ENCODE measurements at regions of chr3 and their contacts with region 1.

Region 1: GRCh38 chr3:138915503-138916498 is 31.1 kb downstream of the FOXL2 start:
- DNase-seq: peak; percentile 97
- ATAC-seq: peak; percentile 92
- H3K4me3 Mint-ChIP-seq: peak overlapping the region; percentile 66
- H3K27ac Mint-ChIP-seq: 0 out of 2 replicates have a peak overlapping the region, but pooled peaks have one; percentile 65
- H3K4me1 Mint-ChIP-seq: peaks cover 3% of the 10 kb centered on the region
- H3K27me3 Mint-ChIP-seq: peaks cover 10% of the 10 kb centered on the region
- CTCF ChIP-seq: peak; percentile 93

Region 2: DNA sequence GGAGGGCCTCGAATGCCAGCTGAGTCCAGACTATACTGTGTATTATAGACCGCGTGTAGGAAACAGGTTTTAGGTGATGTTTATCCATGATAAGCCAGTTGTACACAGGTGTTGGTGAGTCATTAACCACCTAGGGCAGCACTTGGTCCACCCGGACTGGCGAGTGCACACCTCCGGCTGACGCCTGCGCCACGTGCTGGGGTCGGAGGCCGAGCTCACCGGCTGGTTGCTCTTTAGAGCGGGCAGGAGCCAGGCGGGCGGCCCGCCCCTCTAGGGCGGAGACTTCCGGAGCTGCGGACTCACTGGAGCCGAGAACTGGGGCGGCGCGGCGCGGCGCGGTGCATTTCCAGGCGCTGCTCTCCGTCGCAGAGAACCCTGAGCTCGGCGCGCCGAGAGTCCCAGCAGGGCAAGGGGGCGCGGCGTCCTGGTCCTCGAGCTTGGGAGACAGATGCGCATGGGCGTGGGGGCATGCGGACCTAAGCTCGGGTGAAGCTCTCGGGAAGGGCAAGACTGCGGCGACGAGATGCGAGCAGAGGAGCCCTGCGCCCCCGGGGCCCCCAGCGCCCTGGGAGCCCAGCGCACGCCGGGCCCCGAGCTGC is 481.4 kb before region 1 on chr3 and contains the start of gene ESYT3:
- CTCF ChIA-PET with region 1: interaction called, 12 read pairs
- POLR2A ChIA-PET with region 1: no interaction called
- DNase-seq: peak; percentile 86
- ATAC-seq: peak; percentile 89
- H3K4me3 Mint-ChIP-seq: peak within 1 kb of the TSS; percentile 71
- H3K27ac Mint-ChIP-seq: no peak within 1 kb of the TSS
- H3K4me1 Mint-ChIP-seq: peaks cover 9% of the 10 kb centered on the region
- H3K27me3 Mint-ChIP-seq: peaks cover 75% of the 10 kb centered on the region
- CTCF ChIP-seq: no peak
- total RNA-seq, gene ESYT3: 4.4 to 6.4 TPM (median 5.7 TPM) in 3 replicates

Region 3: DNA sequence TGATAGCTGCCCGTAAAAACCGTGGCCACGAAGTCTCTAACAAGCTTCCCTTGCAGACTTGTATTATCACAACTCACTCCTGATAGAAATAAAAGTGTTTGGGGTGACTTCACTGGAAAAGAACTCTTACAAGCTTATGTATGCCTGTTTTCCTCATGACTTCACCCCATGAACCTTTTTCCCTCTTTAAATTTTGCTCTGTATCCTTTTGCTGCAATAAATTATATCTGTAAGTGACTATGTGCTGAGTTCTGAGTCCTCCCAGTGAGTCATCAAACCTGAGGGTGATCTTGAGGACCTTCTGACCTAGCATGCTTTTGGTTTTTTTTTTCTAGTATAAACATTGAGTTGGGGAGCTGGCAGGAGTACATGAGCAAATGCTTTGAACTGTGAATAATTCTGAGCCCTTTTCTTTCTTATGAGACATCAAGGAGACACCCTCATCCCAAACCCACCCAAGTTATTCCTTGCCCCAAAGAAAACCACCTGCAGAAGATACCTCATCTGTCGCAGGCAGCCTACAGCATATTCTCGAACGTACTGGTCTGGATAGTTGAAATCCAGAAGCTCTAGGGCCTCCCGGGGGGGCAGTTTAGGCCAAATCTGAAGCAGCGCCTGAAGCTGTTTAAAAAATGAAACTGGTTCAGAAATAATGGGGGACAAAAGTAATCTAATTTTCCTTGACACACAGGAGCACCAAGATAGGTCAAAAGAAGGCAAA is 221.4 kb before region 1 on chr3:
- CTCF ChIA-PET with region 1: interaction called, 152 read pairs
- POLR2A ChIA-PET with region 1: no interaction called
- DNase-seq: no peak
- ATAC-seq: no peak
- H3K4me3 Mint-ChIP-seq: no peak overlapping the region
- H3K27ac Mint-ChIP-seq: no peak overlapping the region
- H3K4me1 Mint-ChIP-seq: no peaks in the 10 kb centered on the region
- H3K27me3 Mint-ChIP-seq: no peaks in the 10 kb centered on the region
- CTCF ChIP-seq: no peak

Region 4: GRCh38 chr3:138747225-138747624 is 168.6 kb before region 1 on chr3:
- CTCF ChIA-PET with region 1: interaction called, 11 read pairs
- POLR2A ChIA-PET with region 1: no interaction called
- DNase-seq: no peak
- ATAC-seq: no peak
- H3K4me3 Mint-ChIP-seq: no peak overlapping the region
- H3K27ac Mint-ChIP-seq: no peak overlapping the region
- H3K4me1 Mint-ChIP-seq: no peaks in the 10 kb centered on the region
- H3K27me3 Mint-ChIP-seq: no peaks in the 10 kb centered on the region
- CTCF ChIP-seq: no peak

Region 5: GRCh38 chr3:138818185-138818860 is 97.5 kb before region 1 on chr3:
- CTCF ChIA-PET with region 1: interaction called, 27 read pairs
- POLR2A ChIA-PET with region 1: no interaction called
- DNase-seq: no peak
- ATAC-seq: no peak
- H3K4me3 Mint-ChIP-seq: no peak overlapping the region
- H3K27ac Mint-ChIP-seq: peak overlapping the region; percentile 80
- H3K4me1 Mint-ChIP-seq: peaks cover 5% of the 10 kb centered on the region
- H3K27me3 Mint-ChIP-seq: no peaks in the 10 kb centered on the region
- CTCF ChIP-seq: no peak

Region 6: DNA sequence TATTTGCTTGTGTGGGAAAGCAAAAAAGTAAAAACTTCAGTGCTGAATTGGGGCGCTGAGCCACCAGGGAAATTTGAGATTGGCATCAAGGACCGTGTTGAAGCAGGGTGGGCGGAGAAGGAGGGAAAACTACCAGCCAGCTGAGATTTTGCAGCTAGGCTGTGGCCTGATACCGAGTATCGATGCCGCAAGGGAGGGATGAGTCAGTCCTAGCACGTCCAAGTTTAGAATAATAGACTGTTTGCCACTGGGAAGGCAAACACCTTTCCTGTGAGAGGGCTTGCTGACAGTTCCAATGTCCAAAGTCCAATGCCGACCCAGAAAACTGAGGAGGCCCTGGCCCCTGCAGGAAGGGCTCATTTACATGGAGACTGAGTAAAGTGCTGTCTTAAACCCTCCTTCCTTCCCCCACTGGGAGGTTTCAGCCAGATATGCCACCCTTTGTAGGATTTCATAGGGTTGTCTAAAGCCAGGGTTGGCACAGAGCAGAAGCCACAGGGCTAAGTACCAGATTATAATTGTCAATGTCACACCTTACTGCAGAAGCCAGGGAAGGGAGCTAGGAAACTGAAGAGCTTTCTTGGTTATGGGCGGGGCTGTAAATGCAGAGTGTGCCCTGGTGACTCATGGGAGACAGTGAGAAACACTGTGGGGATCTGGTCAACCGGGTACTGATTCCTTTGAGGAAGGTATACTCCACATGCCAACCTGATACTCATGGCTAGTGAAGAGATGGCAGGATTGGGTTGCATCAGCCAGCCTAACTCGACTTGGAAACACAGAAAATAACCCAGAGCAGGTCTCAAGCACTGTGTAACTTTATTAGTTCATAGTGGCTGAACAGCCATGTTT is 52.7 kb before region 1 on chr3:
- CTCF ChIA-PET with region 1: interaction called, 59 read pairs
- POLR2A ChIA-PET with region 1: interaction called, 3 read pairs
- DNase-seq: peak; percentile 35
- ATAC-seq: peak; percentile 59
- H3K4me3 Mint-ChIP-seq: peak overlapping the region; percentile 50
- H3K27ac Mint-ChIP-seq: peak overlapping the region; percentile 94
- H3K4me1 Mint-ChIP-seq: peaks cover 36% of the 10 kb centered on the region
- H3K27me3 Mint-ChIP-seq: no peaks in the 10 kb centered on the region; the same call in 1 of the 2 replicates
- CTCF ChIP-seq: no peak

Region 7: DNA sequence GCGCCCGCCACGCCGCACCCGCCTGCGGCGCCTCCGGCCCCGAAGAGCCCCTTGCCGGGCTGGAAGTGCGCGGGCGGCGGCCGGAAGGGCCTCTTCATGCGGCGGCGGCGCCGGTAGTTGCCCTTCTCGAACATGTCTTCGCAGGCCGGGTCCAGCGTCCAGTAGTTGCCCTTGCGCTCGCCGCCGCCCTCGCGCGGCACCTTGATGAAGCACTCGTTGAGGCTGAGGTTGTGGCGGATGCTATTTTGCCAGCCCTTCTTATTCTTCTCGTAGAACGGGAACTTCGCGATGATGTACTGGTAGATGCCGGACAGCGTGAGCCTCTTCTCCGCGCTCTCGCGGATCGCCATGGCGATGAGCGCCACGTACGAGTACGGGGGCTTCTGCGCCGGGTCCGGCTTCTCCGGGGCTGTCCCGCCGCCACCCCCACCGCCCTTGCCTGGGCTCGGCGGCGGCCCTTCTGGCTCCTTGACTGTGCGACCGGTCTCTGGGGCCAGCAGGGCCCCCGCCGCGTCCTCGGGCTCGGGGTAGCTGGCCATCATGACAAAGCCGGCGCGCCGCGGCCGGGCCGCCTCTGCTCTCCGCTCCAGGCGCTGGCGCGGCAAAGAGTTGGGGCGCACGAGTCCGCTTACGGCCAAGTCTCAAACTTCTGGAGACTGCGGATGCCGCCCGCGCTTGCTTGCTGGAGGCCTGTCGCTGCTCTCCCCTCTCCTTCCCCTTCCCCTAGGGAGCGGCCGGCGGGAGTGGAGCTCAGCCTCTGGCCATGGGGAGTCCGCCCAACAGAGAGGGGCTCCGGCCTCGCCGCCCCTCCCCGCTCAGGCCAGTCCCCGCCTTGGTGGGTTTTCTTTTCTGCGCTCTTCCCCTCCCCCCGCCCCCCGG is 30.6 kb after region 1 on chr3:
- CTCF ChIA-PET with region 1: interaction called, 19 read pairs
- POLR2A ChIA-PET with region 1: no interaction called
- DNase-seq: peak; percentile 71
- ATAC-seq: peak; percentile 4
- H3K4me3 Mint-ChIP-seq: peak overlapping the region; percentile 61
- H3K27ac Mint-ChIP-seq: no peak overlapping the region
- H3K4me1 Mint-ChIP-seq: peaks cover 63% of the 10 kb centered on the region
- H3K27me3 Mint-ChIP-seq: peaks cover 98% of the 10 kb centered on the region
- CTCF ChIP-seq: peak; percentile 17; the same call in 1 of the 2 replicates

Region 8: GRCh38 chr3:138972941-138973340 is 57.1 kb after region 1 on chr3:
- CTCF ChIA-PET with region 1: no interaction called
- POLR2A ChIA-PET with region 1: no interaction called
- DNase-seq: no peak
- ATAC-seq: no peak
- H3K4me3 Mint-ChIP-seq: no peak overlapping the region
- H3K27ac Mint-ChIP-seq: no peak overlapping the region
- H3K4me1 Mint-ChIP-seq: no peaks in the 10 kb centered on the region
- H3K27me3 Mint-ChIP-seq: 0 out of 2 replicates have a peak, but pooled peaks cover 8% of the 10 kb centered on the region
- CTCF ChIP-seq: no peak

Measured in WTC11 (cell line).